Heart left ventricle (tissue), 16 donors: ENCODE measurements at regions of chr1 and their contacts with region 1.

Region 1: GRCh38 chr1:182962554-182963115 is 9.7 kb upstream of the SHCBP1L start:
- DNase-seq: peak; percentile 69 to 86 (median 82)
- ATAC-seq: peak; percentile 97 to 100 (median 100)
- H3K4me3 ChIP-seq: peak overlapping the region in 10 of 12 donors; percentile 15 to 47 (median 32)
- H3K27ac ChIP-seq: peak overlapping the region in 11 of 12 donors; percentile 29 to 81 (median 68)
- H3K4me1 ChIP-seq: peaks cover 0 to 12% (median 5%) of the 10 kb centered on the region in 12 donors
- H3K27me3 ChIP-seq: no peaks in the 10 kb centered on the region
- CTCF ChIP-seq: peak; percentile 84 to 97 (median 92)
- POLR2A ChIP-seq: peak in 1 of 2 donors; percentile 67

Region 2: GRCh38 chr1:183012301-183012994 is 49.8 kb after region 1 on chr1:
- intact Hi-C with region 1: no loop called
- DNase-seq: no peak
- ATAC-seq: no peak
- H3K4me3 ChIP-seq: no peak overlapping the region
- H3K27ac ChIP-seq: no peak overlapping the region
- H3K4me1 ChIP-seq: peaks cover 0 to 7% (median 0%) of the 10 kb centered on the region in 12 donors
- H3K27me3 ChIP-seq: no peaks in the 10 kb centered on the region
- CTCF ChIP-seq: no peak
- POLR2A ChIP-seq: no peak

Region 3: DNA sequence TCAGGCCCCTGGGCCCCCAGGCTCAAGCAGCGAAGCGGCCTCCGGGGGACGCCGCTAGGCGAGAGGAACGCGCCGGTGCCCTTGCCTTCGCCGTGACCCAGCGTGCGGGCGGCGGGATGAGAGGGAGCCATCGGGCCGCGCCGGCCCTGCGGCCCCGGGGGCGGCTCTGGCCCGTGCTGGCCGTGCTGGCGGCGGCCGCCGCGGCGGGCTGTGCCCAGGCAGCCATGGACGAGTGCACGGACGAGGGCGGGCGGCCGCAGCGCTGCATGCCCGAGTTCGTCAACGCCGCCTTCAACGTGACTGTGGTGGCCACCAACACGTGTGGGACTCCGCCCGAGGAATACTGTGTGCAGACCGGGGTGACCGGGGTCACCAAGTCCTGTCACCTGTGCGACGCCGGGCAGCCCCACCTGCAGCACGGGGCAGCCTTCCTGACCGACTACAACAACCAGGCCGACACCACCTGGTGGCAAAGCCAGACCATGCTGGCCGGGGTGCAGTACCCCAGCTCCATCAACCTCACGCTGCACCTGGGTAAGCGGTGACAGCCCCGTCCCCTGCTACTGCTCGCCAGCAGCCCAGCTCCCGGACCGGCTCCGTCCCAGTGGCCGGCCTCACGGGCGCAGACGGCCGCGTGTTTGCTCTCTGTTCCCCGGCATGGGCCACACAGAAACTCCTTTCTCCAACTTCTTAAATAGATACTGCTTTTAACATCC is 61.1 kb after region 1 on chr1:
- intact Hi-C with region 1: loop called (anchors 1 to 10 kb)
- DNase-seq: peak; percentile 60 to 80 (median 66)
- ATAC-seq: peak; percentile 14 to 60 (median 44)
- H3K4me3 ChIP-seq: peak overlapping the region; percentile 42 to 95 (median 84)
- H3K27ac ChIP-seq: peak overlapping the region; percentile 99 to 100 (median 100)
- H3K4me1 ChIP-seq: peaks cover 0 to 58% (median 37%) of the 10 kb centered on the region in 12 donors
- H3K27me3 ChIP-seq: peaks cover 0 to 4% (median 0%) of the 10 kb centered on the region in 9 donors
- CTCF ChIP-seq: peak; percentile 20 to 63 (median 48)
- POLR2A ChIP-seq: no peak

Region 4: GRCh38 chr1:183124259-183124658 is 161.6 kb after region 1 on chr1:
- intact Hi-C with region 1: loop called in 2 of 10 experiments (anchors 5 to 10 kb)
- DNase-seq: no peak
- ATAC-seq: peak in 1 of 4 donors; percentile 27
- H3K4me3 ChIP-seq: no peak overlapping the region
- H3K27ac ChIP-seq: peak overlapping the region in 2 of 12 donors; percentile 4 to 15
- H3K4me1 ChIP-seq: peaks cover 0 to 15% (median 0%) of the 10 kb centered on the region in 12 donors
- H3K27me3 ChIP-seq: no peaks in the 10 kb centered on the region
- CTCF ChIP-seq: no peak
- POLR2A ChIP-seq: no peak

Region 5: DNA sequence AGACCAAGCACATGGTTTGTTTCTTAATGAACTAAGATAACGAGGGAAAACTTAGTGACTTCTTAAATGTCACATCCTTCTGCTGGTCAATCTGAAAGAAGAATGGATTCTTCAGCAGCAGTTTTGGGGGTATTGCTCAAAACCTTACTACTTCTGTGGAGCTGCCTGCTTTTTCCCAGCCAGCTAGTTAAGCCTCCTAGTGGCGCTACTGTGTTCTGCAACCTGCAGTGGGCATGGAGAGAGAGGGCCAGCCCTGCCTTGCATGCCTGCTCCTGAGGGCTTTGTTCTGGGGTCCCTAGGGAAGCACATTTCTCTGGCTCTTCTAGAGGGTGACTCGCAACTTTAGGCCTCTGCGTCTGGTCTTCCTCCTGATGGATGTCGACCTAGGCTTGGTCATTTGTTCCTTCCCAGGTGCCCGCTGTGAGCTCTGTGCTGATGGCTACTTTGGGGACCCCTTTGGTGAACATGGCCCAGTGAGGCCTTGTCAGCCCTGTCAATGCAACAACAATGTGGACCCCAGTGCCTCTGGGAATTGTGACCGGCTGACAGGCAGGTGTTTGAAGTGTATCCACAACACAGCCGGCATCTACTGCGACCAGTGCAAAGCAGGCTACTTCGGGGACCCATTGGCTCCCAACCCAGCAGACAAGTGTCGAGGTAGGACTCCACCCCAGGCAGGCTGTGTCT is 265.5 kb after region 1 on chr1:
- intact Hi-C with region 1: loop called (anchors 2 to 5 kb)
- DNase-seq: peak in 4 of 5 donors; percentile 42 to 55 (median 51)
- ATAC-seq: peak; percentile 20 to 76 (median 66)
- H3K4me3 ChIP-seq: no peak overlapping the region
- H3K27ac ChIP-seq: no peak overlapping the region
- H3K4me1 ChIP-seq: peaks cover 0 to 5% (median 0%) of the 10 kb centered on the region in 12 donors
- H3K27me3 ChIP-seq: no peaks in the 10 kb centered on the region
- CTCF ChIP-seq: peak; percentile 69 to 81 (median 76)
- POLR2A ChIP-seq: no peak

Region 6: GRCh38 chr1:183318433-183318832 is 355.8 kb after region 1 on chr1:
- intact Hi-C with region 1: loop called (anchors 2 to 5 kb)
- DNase-seq: peak; percentile 77 to 92 (median 82)
- ATAC-seq: peak; percentile 94 to 99 (median 97)
- H3K4me3 ChIP-seq: no peak overlapping the region
- H3K27ac ChIP-seq: peak overlapping the region; percentile 46 to 92 (median 82)
- H3K4me1 ChIP-seq: peaks cover 0 to 37% (median 25%) of the 10 kb centered on the region in 12 donors
- H3K27me3 ChIP-seq: no peaks in the 10 kb centered on the region
- CTCF ChIP-seq: peak; percentile 48 to 89 (median 72)
- POLR2A ChIP-seq: no peak